Mammary epithelial cell (primary cell): ENCODE measurements at regions of chr6 and their contacts with region 1.

Region 1: GRCh38 chr6:143397229-143398222 is 53.0 kb downstream of the ADAT2 start:
- DNase-seq: peak; percentile 100
- H3K4me3 ChIP-seq: no peak overlapping the region
- H3K27ac ChIP-seq: peak overlapping the region; percentile 97
- H3K4me1 ChIP-seq: peaks cover 63% of the 10 kb centered on the region
- H3K27me3 ChIP-seq: no peaks in the 10 kb centered on the region
- CTCF ChIP-seq: no peak

Region 2: DNA sequence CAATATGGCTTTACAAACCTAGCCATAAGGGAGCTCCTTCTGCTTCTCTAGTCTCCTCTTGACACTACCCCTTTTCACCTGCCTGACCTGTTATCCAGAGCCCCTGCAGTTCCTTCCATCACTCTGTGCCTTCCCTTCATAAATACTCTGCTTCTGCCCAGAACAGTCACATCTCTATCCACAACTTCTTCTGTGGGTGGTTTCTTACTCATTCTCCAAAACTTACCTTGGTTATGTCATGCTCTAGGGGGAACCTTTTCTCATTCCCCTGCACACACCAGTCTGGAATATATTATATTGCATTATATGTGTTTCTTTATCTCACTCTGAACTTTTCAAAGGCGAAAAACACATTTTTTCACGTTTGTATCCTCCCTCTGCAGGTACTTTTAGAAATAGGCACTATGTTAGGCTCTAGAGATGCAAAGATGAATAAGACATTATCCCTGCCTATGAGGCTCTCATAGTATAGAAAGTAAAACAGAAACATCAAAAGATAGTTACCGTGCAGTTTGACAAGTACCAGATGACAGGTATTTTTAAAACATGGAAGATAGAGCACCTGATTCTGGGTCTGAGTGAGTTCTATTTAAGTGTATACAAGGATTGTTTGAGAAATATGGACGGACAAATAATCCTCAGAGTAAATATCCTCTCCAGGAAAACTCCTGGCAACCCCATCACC is 285.3 kb before region 1 on chr6:
- CTCF ChIA-PET with region 1: no interaction called
- dilution Hi-C with region 1: no loop called
- in situ Hi-C with region 1: no loop called
- intact Hi-C with region 1: no loop called
- DNase-seq: no peak
- H3K4me3 ChIP-seq: no peak overlapping the region
- H3K27ac ChIP-seq: no peak overlapping the region
- H3K4me1 ChIP-seq: peaks cover 11% of the 10 kb centered on the region
- H3K27me3 ChIP-seq: no peaks in the 10 kb centered on the region
- CTCF ChIP-seq: no peak

Region 3: GRCh38 chr6:143232849-143233248 is 164.7 kb before region 1 on chr6:
- CTCF ChIA-PET with region 1: no interaction called
- dilution Hi-C with region 1: no loop called
- in situ Hi-C with region 1: loop called (anchors 25 kb)
- intact Hi-C with region 1: no loop called
- DNase-seq: peak; percentile 20
- H3K4me3 ChIP-seq: no peak overlapping the region
- H3K27ac ChIP-seq: no peak overlapping the region
- H3K4me1 ChIP-seq: peaks cover 7% of the 10 kb centered on the region
- H3K27me3 ChIP-seq: no peaks in the 10 kb centered on the region
- CTCF ChIP-seq: peak; percentile 70 to 91

Region 4: DNA sequence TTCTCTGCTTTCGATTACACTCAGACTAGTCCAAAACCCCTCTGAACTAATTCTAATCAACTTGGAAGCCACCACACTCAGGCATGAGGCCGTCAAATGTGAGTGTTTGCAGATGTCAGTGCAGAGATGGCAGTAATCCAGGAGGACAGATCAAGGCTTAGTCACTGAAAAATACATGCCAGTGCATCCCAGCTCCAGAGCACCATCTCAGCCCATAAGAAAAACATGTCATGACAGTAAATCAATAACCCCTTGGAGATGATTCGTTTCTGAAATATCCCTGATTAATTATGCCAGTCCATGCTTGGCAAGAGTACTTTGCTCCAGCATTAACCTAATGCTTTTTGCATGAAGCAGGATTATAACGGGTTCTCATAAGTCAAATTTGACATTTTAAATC is 126.5 kb before region 1 on chr6:
- CTCF ChIA-PET with region 1: no interaction called
- dilution Hi-C with region 1: no loop called
- in situ Hi-C with region 1: no loop called
- intact Hi-C with region 1: loop called (anchors 2 kb)
- DNase-seq: peak; percentile 80
- H3K4me3 ChIP-seq: no peak overlapping the region
- H3K27ac ChIP-seq: no peak overlapping the region
- H3K4me1 ChIP-seq: peaks cover 11% of the 10 kb centered on the region
- H3K27me3 ChIP-seq: no peaks in the 10 kb centered on the region
- CTCF ChIP-seq: no peak

Region 5: DNA sequence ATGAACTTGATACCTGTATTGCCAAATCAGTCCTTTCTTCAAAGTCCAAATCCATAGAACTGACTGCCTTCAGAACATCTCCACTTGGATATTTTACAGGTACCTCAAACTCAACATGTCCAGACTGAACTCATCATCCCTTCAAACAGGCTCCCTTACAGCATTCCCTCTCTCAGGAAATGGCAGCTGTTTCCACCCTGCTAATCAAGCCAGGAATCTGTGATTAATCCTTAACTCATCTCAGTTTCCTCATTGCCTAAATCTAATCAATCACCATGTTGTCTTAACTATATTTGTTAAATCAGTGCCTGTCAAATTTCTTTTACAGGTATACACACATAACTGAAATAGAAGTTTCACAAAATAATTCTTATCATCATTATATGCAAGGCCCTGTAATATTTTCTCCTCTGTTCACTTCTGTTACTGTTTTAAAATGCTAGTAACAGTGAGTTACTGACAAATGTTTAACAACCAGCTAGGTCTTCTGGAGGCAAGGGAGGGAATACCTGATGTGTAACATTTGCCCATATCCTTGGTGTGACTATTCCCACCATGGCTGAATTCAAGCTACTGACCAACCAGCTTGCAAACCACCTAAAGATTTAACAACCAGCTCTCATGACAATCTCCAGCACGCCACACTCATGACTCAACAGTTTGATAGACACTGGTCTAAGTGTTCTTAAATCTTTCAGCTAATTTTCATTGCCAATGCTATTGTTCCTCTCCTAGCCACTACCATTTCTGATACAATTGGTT is 72.0 kb before region 1 on chr6:
- CTCF ChIA-PET with region 1: no interaction called
- dilution Hi-C with region 1: no loop called
- in situ Hi-C with region 1: no loop called
- intact Hi-C with region 1: loop called (anchors 1 kb)
- DNase-seq: peak; percentile 92
- H3K4me3 ChIP-seq: no peak overlapping the region
- H3K27ac ChIP-seq: peak overlapping the region; percentile 98
- H3K4me1 ChIP-seq: peaks cover 63% of the 10 kb centered on the region
- H3K27me3 ChIP-seq: no peaks in the 10 kb centered on the region
- CTCF ChIP-seq: no peak

Region 6: DNA sequence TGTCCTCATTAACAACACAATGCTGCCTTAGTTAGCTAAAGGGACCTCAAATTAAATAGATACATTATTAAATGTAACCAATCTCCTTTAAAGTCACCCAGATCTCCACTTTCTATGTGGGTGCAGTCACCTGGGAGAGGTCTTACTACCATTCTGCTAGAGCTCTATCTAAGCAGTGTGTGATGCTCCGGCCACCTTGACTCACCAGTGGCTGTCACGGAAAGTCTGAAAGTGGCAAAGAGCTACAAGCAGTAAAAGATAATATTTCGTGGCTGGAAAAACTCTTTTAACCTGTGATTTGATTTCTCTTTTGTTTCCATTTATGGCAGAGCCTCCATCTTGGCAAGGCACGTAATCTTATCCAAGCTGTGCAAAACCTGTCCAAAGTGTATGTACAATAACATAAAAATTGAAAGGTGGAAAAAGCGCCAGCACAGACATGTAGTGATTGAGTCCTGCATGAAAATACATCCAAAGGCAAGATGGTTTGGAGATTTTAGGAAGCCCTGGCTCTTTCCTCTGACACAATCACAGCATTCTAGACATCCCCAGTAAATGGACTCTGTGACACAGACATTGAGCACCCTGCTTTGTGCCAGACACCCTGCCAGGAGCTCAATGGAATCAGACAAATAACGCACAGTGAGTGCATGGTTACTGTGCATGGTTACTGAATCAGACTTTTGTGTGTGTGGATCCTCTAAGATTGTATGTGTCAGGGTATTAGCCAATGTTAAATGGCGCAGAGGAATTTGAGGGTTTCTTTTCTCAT is 63.6 kb before region 1 on chr6:
- CTCF ChIA-PET with region 1: no interaction called
- dilution Hi-C with region 1: no loop called
- in situ Hi-C with region 1: no loop called
- intact Hi-C with region 1: loop called (anchors 1 kb)
- DNase-seq: peak; percentile 52
- H3K4me3 ChIP-seq: peak overlapping the region in 2 of 3 experiments; percentile 9 to 21
- H3K27ac ChIP-seq: peak overlapping the region; percentile 98
- H3K4me1 ChIP-seq: peaks cover 73% of the 10 kb centered on the region
- H3K27me3 ChIP-seq: no peaks in the 10 kb centered on the region
- CTCF ChIP-seq: no peak